Activated naive CD4-positive, alpha-beta T cell treated with anti-CD3 and anti-CD28 coated beads for 36 hours (primary cell): ENCODE measurements at regions of chr6 and their contacts with region 1.

Region 1: DNA sequence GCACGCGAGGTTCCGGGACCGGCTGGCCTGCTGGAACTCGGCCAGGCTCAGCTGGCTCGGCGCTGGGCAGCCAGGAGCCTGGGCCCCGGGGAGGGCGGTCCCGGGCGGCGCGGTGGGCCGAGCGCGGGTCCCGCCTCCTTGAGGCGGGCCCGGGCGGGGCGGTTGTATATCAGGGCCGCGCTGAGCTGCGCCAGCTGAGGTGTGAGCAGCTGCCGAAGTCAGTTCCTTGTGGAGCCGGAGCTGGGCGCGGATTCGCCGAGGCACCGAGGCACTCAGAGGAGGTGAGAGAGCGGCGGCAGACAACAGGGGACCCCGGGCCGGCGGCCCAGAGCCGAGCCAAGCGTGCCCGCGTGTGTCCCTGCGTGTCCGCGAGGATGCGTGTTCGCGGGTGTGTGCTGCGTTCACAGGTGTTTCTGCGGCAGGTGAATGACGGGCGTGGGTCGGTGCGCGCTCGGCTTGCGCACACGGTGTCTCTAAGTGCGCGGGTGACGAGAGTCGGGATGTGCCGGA is at the start of gene CDKN1A:
- DNase-seq: peak; percentile 81
- H3K4me3 Mint-ChIP-seq: peak within 1 kb of the TSS; percentile 99
- H3K27ac Mint-ChIP-seq: peak within 1 kb of the TSS; percentile 86
- H3K4me1 Mint-ChIP-seq: peaks cover 47% of the 10 kb centered on the region
- H3K27me3 Mint-ChIP-seq: peaks cover 13% of the 10 kb centered on the region
- total RNA-seq, gene CDKN1A: 90.1 to 92.3 TPM

Region 2: GRCh38 chr6:35955976-35956375 is 722.6 kb before region 1 on chr6:
- CTCF ChIA-PET with region 1: no interaction called
- intact Hi-C with region 1: no loop called
- DNase-seq: peak; percentile 52
- H3K4me3 Mint-ChIP-seq: no peak overlapping the region
- H3K27ac Mint-ChIP-seq: no peak overlapping the region
- H3K4me1 Mint-ChIP-seq: peaks cover 11% of the 10 kb centered on the region
- H3K27me3 Mint-ChIP-seq: peaks cover 10% of the 10 kb centered on the region

Region 3: GRCh38 chr6:36423101-36423824 is 255.3 kb before region 1 on chr6:
- CTCF ChIA-PET with region 1: no interaction called
- intact Hi-C with region 1: loop called (anchors 1 kb)
- DNase-seq: peak; percentile 99
- H3K4me3 Mint-ChIP-seq: peak overlapping the region; percentile 89
- H3K27ac Mint-ChIP-seq: peak overlapping the region; percentile 95
- H3K4me1 Mint-ChIP-seq: peaks cover 15% of the 10 kb centered on the region
- H3K27me3 Mint-ChIP-seq: no peaks in the 10 kb centered on the region

Region 4: DNA sequence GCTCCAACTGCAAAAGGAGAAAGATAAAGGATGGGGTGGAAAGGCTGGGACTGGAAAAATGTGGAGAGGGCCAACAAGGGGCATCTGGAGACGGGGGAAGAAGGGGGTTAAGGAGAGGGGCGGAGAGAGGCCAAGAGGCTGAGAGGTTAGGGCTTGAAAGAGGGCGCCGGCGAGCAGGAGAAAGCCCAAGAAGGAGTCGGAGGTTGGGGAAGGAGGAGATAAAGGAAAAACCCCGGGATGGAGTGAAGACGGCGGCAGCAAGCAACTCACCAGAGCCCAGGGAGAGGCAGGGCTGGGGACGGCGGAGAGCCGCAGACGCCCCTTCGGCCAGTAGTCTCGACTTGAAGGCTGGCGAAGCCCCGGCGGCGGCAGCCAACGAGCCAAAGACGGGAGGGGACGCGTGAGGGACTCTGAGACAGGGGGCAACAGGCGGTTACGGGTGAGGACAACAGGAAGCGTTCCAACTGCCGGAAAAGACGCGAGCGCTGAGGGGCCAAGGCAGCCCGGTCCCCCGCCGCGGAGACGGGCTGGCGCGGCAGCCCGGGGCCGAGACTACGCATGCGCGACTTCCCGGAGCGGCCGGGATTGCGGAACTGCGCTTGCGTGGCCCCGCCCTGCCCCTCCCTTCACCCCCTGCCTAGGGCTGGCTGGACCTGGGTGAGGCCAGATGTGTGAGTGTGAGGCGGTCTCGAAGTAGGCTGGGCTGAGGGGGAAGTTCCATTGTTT is 131.5 kb before region 1 on chr6 and contains the start of gene STK38:
- CTCF ChIA-PET with region 1: no interaction called
- intact Hi-C with region 1: loop called (anchors 5 kb)
- DNase-seq: peak; percentile 95
- H3K4me3 Mint-ChIP-seq: peak within 1 kb of the TSS; percentile 97
- H3K27ac Mint-ChIP-seq: peak within 1 kb of the TSS; percentile 97
- H3K4me1 Mint-ChIP-seq: peaks cover 39% of the 10 kb centered on the region
- H3K27me3 Mint-ChIP-seq: no peaks in the 10 kb centered on the region
- total RNA-seq, gene STK38: 23.6 to 24.4 TPM

Region 5: GRCh38 chr6:36615018-36615761 is 63.4 kb before region 1 on chr6:
- CTCF ChIA-PET with region 1: interaction called, 7 read pairs
- intact Hi-C with region 1: loop called (anchors 2 kb)
- DNase-seq: peak; percentile 64
- H3K4me3 Mint-ChIP-seq: no peak overlapping the region
- H3K27ac Mint-ChIP-seq: peak overlapping the region; percentile 79
- H3K4me1 Mint-ChIP-seq: peaks cover 20% of the 10 kb centered on the region
- H3K27me3 Mint-ChIP-seq: no peaks in the 10 kb centered on the region

Region 6: DNA sequence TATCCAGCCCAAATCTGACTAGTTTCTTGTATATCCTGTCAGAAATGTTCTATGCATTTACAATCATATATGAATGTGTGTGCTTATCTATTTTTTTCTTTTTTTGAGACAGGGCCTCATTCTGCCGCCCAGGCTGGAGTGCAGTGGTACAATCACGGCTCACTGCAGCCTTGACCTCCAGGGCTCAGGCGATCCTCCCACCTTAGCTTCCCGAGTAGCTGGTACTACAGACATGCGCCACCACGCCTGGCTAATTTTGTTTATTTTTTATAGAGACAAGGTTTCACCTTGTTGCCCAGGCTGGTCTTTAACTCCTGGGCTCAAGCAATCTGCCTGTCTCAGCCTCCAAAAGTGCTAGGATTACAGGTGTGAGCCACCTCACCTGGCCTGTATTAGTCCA is 16.0 kb after region 1 on chr6:
- CTCF ChIA-PET with region 1: interaction called, 10 read pairs
- intact Hi-C with region 1: loop called (anchors 1 kb)
- DNase-seq: no peak
- H3K4me3 Mint-ChIP-seq: no peak overlapping the region
- H3K27ac Mint-ChIP-seq: no peak overlapping the region
- H3K4me1 Mint-ChIP-seq: peaks cover 26% of the 10 kb centered on the region
- H3K27me3 Mint-ChIP-seq: peaks cover 5% of the 10 kb centered on the region

Region 7: GRCh38 chr6:36735110-36736071 is 56.8 kb after region 1 on chr6:
- CTCF ChIA-PET with region 1: interaction called, 5 read pairs
- intact Hi-C with region 1: loop called (anchors 1 kb)
- DNase-seq: peak; percentile 87
- H3K4me3 Mint-ChIP-seq: peak overlapping the region; percentile 59
- H3K27ac Mint-ChIP-seq: peak overlapping the region; percentile 91
- H3K4me1 Mint-ChIP-seq: peaks cover 28% of the 10 kb centered on the region
- H3K27me3 Mint-ChIP-seq: no peaks in the 10 kb centered on the region